ENCODE measurements at regions of chr19 and their contacts with region 1.

Region 1: DNA sequence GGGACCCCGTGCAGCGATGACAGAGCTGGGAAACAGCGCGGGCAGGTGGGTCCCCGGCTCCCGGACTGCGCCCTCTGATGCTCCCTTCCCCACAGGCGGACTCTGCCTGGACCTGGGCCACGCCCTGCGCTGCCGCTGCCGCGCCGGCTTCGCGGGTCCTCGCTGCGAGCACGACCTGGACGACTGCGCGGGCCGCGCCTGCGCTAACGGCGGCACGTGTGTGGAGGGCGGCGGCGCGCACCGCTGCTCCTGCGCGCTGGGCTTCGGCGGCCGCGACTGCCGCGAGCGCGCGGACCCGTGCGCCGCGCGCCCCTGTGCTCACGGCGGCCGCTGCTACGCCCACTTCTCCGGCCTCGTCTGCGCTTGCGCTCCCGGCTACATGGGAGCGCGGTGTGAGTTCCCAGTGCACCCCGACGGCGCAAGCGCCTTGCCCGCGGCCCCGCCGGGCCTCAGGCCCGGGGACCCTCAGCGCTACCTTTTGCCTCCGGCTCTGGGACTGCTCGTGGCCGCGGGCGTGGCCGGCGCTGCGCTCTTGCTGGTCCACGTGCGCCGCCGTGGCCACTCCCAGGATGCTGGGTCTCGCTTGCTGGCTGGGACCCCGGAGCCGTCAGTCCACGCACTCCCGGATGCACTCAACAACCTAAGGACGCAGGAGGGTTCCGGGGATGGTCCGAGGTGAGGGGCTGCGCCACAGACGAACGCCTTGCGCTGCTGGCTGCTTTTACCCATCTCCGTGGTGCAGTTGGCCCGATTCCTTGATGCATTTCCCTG is 7.8 kb upstream of the SELENOV start:
- DNase-seq: peak in 1 of 4 donors; percentile 30
- ATAC-seq: peak; percentile 17
- H3K4me3 ChIP-seq: no peak overlapping the region
- H3K27ac ChIP-seq: no peak overlapping the region
- H3K4me1 ChIP-seq: peaks cover 9% of the 10 kb centered on the region
- H3K27me3 ChIP-seq: no peaks in the 10 kb centered on the region
- CTCF ChIP-seq: no peak
- POLR2A ChIP-seq: no peak

Region 2: DNA sequence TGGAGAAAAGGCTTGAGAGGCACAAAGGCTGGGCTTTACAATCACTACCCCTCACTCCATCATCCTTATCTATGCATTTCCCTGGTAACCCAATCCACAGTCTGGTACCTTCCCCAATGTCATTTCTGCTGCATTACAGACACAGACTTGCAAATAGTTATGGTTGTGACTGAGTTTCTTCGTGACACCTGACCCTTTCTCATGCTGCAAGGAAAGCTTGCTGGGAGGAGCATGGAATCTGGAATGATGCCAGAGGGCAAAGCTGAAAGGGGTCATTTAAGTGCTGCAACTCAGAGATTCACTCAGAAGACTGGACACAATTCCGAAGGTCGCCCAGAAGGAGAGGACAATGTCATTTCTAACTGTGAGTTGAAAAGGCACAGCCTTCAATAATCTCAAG is 148.5 kb after region 1 on chr19 and contains the start of gene LGALS16:
- intact Hi-C with region 1: loop called (anchors 5 kb)
- DNase-seq: no peak
- ATAC-seq: no peak
- H3K4me3 ChIP-seq: no peak within 1 kb of the TSS
- H3K27ac ChIP-seq: no peak within 1 kb of the TSS
- H3K4me1 ChIP-seq: no peaks in the 10 kb centered on the region
- H3K27me3 ChIP-seq: no peaks in the 10 kb centered on the region
- CTCF ChIP-seq: no peak
- POLR2A ChIP-seq: no peak
- total RNA-seq, gene LGALS16: not detected